ENCODE measurements at regions of chr10 and their contacts with region 1.

Region 1: GRCh38 chr10:69392481-69393000 is 24.2 kb downstream of the TACR2 start:
- DNase-seq: peak; percentile 73 to 88
- H3K4me3 ChIP-seq: no peak overlapping the region
- H3K27ac ChIP-seq: peak overlapping the region; percentile 21; the same call in 1 of the 2 replicates
- H3K4me1 ChIP-seq: peaks cover 29% of the 10 kb centered on the region
- H3K27me3 ChIP-seq: no peaks in the 10 kb centered on the region
- CTCF ChIP-seq: peak; percentile 98

Region 2: DNA sequence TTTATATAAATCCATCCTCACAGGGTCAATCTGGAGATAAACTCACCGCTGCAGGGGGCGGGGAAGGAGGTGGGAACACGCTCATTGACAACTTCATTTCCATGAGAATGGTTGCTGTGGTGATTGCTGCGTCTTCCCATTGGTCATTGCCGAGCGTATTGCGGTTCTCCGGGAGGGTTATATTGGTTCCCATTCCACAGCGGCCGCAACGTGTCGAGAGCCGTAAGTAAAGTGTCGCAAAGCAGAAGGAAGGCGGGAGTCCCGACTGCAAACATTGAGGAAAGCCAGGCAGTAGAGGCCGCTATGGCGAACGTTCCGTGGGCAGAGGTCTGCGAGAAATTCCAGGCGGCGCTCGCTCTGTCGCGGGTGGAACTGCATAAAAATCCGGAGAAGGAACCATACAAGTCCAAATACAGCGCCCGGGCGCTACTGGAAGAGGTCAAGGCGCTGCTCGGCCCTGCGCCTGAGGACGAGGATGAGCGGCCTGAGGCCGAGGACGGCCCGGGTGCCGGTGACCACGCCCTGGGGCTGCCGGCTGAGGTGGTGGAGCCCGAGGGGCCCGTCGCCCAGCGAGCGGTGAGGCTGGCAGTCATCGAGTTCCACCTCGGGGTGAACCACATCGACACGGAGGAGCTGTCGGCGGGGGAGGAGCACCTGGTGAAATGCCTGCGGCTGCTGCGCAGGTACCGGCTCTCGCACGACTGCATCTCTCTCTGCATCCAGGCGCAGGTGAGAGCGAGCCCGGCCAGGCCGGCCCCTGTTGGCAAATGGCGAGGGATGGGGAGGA is 403.8 kb before region 1 on chr10 and contains the start of gene KIFBP:
- CTCF ChIA-PET with region 1: no interaction called
- POLR2A ChIA-PET with region 1: no interaction called
- intact Hi-C with region 1: loop called (anchors 5 kb)
- DNase-seq: peak; percentile 94 to 97
- H3K4me3 ChIP-seq: peak within 1 kb of the TSS; percentile 84
- H3K27ac ChIP-seq: 0 out of 2 replicates have a peak within 1 kb of the TSS, but pooled peaks have one; percentile 20
- H3K4me1 ChIP-seq: peaks cover 19% of the 10 kb centered on the region
- H3K27me3 ChIP-seq: no peaks in the 10 kb centered on the region
- CTCF ChIP-seq: peak; percentile 62; the same call in 1 of the 2 replicates
- total RNA-seq, gene KIFBP: 26.0 and 30.1 TPM in 2 replicates

Region 3: DNA sequence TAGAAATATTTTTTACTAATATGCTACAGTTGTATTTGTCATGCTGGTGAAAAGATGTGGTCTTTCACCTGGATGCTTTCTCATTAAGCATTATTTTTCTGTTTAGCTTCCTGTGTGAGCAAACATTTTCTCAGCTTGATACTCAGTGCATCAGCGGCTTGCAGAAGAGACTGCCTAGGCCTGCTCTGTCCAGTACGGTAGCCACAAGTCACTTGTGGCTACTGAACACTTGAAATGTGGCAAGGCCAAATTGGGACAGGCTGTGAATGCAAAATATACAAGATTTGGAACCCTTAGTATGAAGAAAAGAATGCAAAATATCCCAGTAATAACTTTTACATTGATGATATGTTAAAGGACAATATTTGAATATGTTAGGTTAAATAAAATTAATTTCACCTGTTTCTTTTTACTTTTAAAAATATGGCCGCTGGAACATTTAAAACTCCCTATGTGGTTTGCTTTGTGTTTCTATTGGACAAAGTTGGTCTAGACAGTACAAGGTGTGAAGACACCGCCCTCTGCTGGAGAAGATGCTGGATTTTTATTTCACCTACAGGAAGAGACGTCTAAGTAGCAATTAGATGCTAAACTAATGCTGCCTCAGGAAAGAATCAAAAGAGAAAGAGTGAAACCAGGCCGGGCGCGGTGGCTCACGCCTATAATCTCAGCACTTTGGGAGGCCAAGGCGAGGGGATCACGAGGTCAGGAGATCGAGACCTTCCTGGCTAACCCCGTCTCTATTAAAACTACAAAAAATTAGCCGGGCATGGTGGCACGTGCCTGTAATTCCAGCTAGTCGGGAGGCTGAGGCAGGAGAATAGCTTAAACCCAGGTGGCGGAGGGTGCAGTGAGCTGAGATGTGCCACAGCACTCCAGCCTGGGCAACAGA is 299.3 kb before region 1 on chr10:
- CTCF ChIA-PET with region 1: no interaction called
- POLR2A ChIA-PET with region 1: no interaction called
- intact Hi-C with region 1: loop called (anchors 1 kb)
- DNase-seq: peak; percentile 73 to 77
- H3K4me3 ChIP-seq: no peak overlapping the region
- H3K27ac ChIP-seq: no peak overlapping the region
- H3K4me1 ChIP-seq: peaks cover 7% of the 10 kb centered on the region; the same call in 1 of the 2 replicates
- H3K27me3 ChIP-seq: no peaks in the 10 kb centered on the region
- CTCF ChIP-seq: peak; percentile 94

Region 4: GRCh38 chr10:69248117-69248730 is 144.3 kb before region 1 on chr10:
- CTCF ChIA-PET with region 1: no interaction called
- POLR2A ChIA-PET with region 1: interaction called, 10 read pairs
- intact Hi-C with region 1: no loop called
- DNase-seq: no peak
- H3K4me3 ChIP-seq: no peak overlapping the region
- H3K27ac ChIP-seq: no peak overlapping the region
- H3K4me1 ChIP-seq: no peaks in the 10 kb centered on the region
- H3K27me3 ChIP-seq: no peaks in the 10 kb centered on the region
- CTCF ChIP-seq: no peak

Region 5: GRCh38 chr10:69337296-69338132 is 55.0 kb before region 1 on chr10:
- CTCF ChIA-PET with region 1: interaction called, 3 read pairs
- POLR2A ChIA-PET with region 1: no interaction called
- intact Hi-C with region 1: loop called (anchors 1 kb)
- DNase-seq: peak; percentile 81 to 82
- H3K4me3 ChIP-seq: no peak overlapping the region; the same call in 1 of the 2 replicates
- H3K27ac ChIP-seq: peak overlapping the region; percentile 42
- H3K4me1 ChIP-seq: peaks cover 70% of the 10 kb centered on the region
- H3K27me3 ChIP-seq: no peaks in the 10 kb centered on the region
- CTCF ChIP-seq: no peak

Region 6: GRCh38 chr10:69348816-69349541 is 43.6 kb before region 1 on chr10:
- CTCF ChIA-PET with region 1: no interaction called
- POLR2A ChIA-PET with region 1: no interaction called
- intact Hi-C with region 1: no loop called
- DNase-seq: peak; percentile 88 to 98
- H3K4me3 ChIP-seq: peak overlapping the region; percentile 14; the same call in 1 of the 2 replicates
- H3K27ac ChIP-seq: peak overlapping the region; percentile 89
- H3K4me1 ChIP-seq: peaks cover 79% of the 10 kb centered on the region
- H3K27me3 ChIP-seq: no peaks in the 10 kb centered on the region
- CTCF ChIP-seq: no peak

Measured in PC-9 (cell line).